Right ventricle myocardium superior (tissue), 1 donor: ENCODE measurements at regions of chr7 and their contacts with region 1.

Region 1: DNA sequence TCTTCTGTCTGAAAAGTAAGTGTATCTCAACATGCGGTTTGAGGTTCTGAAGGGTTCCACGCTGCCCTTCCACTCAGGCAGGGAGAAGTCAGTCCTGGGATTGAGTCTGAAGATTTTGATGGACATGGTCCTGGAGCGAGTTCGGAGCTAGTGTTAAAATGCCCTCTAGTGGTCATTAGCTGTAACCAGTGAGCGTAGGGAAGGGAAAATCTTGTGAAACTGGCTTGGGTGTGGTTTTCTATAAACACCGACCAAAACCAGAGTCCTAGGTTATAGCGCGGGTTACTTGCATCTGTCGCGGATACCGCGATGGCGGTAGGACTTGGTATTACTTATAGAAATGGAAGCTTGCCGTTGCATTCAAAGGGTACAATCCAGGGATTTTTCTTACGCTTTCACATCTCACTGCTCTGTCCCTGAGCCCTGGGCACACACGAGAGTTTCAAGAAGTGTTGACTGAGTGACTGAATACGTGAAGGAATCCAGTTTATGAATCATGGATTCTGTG is 348.2 kb upstream of the C7orf33 start:
- DNase-seq: no peak
- ATAC-seq: peak; percentile 89

Region 2: GRCh38 chr7:147013825-147014224 is 1228.5 kb before region 1 on chr7:
- intact Hi-C with region 1: no loop called
- DNase-seq: no peak
- ATAC-seq: no peak

Region 3: GRCh38 chr7:147363101-147363500 is 879.2 kb before region 1 on chr7:
- intact Hi-C with region 1: no loop called
- DNase-seq: no peak
- ATAC-seq: no peak

Region 4: DNA sequence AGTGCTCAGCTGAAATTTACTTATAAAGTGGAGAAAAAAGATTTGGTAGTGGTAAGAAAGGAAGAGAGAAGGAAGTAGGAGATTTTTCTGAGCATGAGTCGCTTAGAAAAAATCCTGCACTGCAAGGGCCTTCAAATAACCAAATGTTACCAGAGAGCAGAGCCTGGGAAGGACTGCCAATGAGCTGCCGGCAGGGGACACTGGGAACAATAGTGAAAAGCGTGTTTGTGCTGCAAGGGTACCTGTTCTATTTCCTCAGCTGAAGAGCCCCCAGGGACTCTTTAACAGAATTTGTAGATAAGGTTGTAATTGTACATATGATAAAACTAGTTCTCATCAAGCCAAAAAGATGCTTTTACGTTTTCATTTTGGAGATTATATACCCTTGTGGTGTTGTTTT is 348.1 kb before region 1 on chr7:
- intact Hi-C with region 1: no loop called
- DNase-seq: no peak
- ATAC-seq: no peak

Region 5: GRCh38 chr7:148110111-148110868 is 132.1 kb before region 1 on chr7:
- intact Hi-C with region 1: loop called (anchors 5 kb)
- DNase-seq: no peak
- ATAC-seq: peak; percentile 73